Left cardiac atrium (tissue), 4 donors: ENCODE measurements at regions of chr17 and their contacts with region 1.

Region 1: DNA sequence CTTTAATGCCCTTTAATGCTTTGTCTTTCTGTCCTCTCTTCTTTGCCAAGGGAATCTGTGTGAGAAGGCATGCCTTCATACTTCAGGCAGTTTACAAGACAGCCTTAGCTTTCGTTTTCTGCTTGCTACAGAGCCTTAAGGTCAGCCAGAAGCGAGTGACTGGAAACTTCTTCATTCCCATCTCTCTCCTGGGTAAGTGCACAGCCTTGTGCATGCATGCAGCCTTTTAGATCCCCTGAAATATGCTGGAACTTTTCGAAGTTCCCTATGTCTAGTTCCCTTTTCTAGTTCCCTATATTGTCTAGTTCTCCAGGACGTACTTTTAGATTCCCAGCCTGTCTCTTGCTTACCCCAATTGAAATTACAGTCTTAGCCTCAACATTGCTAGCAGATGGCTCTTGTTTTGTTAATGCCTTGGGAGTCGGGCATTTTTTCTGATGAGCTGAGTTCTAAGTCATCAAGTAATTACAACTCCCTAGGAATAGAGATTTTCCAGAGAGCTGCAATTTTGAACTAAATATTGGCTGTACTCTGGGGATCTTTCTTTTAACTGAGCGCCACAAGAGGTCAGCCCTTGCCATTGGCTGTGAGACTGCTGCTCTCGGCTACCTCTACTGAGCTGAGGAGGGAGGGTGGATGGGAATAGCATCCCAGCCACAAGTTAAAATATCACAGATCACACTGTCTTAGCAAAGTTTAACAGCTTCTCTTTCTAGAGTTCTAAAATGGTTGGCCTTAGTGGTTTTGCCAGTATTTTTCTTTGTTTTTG is 22.7 kb upstream of the PPM1D start:
- DNase-seq: no peak
- ATAC-seq: peak; percentile 78 to 87

Region 2: GRCh38 chr17:60390186-60390585 is 187.1 kb before region 1 on chr17:
- intact Hi-C with region 1: no loop called
- DNase-seq: no peak
- ATAC-seq: no peak

Region 3: DNA sequence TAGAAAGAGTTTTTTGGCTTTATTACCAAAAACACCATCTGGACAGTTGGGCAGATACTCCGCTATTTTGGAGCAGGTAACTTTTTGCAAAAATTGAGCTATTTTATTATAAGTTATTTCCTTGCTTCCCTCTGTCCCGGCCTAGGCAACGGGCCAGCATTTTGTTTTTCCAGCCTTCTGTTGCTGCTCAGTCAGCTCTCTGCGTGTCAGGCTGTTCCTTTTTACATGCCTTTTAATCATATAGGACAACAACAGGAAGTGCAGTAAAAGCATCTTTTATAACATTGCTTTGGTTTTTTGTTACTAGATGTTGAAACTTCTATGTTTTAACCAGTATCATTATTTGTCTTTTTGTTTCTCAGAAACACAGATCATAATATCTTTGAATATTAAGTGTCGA is 53.0 kb after region 1 on chr17:
- intact Hi-C with region 1: loop called (anchors 5 to 10 kb)
- DNase-seq: no peak
- ATAC-seq: no peak

Region 4: DNA sequence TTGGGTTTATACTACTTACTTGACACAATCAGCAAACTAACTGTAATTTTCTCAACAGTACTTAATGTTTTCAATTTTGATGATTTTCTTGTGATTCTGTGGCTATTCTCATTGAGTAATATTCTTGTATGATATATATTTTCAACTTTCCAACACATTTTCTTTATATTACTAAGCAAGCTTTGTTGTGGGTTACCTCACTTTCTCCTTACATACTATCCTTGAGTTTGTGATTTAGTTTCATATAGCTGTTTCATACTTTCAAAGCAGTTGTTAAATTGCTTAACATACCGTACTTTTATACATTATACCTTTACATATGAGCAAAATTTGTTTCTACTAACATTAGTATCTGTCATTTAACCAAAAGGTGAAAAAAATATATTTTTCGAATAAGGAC is 297.4 kb after region 1 on chr17:
- intact Hi-C with region 1: no loop called
- DNase-seq: no peak
- ATAC-seq: no peak